ENCODE measurements at regions of chr1 and their contacts with region 1.

Region 1: DNA sequence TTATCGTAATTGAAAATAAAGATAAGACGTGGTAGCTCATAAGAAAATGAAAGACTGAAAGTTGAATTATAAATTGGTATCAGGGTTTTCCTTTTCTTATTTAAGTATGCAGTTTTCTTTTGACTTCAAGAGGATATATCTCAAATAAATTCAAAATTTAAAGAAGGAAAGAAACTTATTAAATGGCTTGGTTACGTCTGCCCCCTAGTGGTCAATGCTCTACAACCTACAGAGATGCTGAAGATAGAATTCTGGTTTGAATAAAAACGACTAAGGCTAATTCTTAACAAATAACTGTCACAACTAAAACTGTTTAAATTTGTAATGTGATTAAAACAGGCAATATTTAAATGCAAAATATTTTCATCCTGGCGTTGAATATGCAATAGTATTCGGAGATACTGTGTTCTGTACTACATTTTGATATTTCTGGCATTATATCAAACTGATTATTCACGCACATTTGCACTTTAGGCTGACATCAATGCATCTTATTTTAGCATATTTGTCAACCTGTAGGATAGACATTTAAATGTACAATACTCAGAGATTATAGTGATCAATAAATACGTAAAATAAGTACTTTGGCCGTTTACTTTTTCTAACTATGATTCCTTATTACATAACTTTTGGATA is 26.8 kb downstream of the IFI44 start:
- DNase-seq: peak; percentile 57 to 65
- H3K4me3 ChIP-seq: no peak overlapping the region
- H3K27ac ChIP-seq: no peak overlapping the region
- H3K4me1 ChIP-seq: no peaks in the 10 kb centered on the region
- H3K27me3 ChIP-seq: no peaks in the 10 kb centered on the region
- CTCF ChIP-seq: peak; percentile 62 to 90 (median 80)
- POLR2A ChIP-seq: no peak

Region 2: DNA sequence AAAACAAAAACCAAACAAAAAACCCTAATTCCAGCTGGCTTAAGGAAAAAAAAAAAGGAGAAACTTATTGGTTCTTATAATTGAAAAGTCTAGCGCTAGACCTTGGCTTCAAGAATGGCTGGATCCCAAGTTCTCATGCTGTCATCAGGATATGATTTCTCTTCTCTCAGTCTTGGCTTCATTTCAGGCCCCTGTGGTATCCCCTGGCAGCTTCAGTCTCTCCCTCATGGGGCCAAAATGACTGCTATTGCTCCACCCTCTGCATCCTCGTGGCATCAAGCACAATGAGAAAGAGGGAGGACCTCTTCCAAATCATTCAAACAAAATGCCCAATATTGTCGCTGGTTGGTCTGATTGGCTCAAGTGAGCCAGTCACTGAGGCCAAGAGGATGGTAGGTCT is 550.0 kb before region 1 on chr1:
- intact Hi-C with region 1: loop called (anchors 10 kb)
- DNase-seq: no peak
- H3K4me3 ChIP-seq: no peak overlapping the region
- H3K27ac ChIP-seq: no peak overlapping the region
- H3K4me1 ChIP-seq: no peaks in the 10 kb centered on the region
- H3K27me3 ChIP-seq: no peaks in the 10 kb centered on the region
- CTCF ChIP-seq: no peak
- POLR2A ChIP-seq: no peak

Region 3: GRCh38 chr1:78475888-78476610 is 200.4 kb before region 1 on chr1:
- intact Hi-C with region 1: no loop called
- DNase-seq: no peak
- H3K4me3 ChIP-seq: no peak overlapping the region
- H3K27ac ChIP-seq: no peak overlapping the region
- H3K4me1 ChIP-seq: no peaks in the 10 kb centered on the region
- H3K27me3 ChIP-seq: no peaks in the 10 kb centered on the region
- CTCF ChIP-seq: no peak
- POLR2A ChIP-seq: no peak

Region 4: DNA sequence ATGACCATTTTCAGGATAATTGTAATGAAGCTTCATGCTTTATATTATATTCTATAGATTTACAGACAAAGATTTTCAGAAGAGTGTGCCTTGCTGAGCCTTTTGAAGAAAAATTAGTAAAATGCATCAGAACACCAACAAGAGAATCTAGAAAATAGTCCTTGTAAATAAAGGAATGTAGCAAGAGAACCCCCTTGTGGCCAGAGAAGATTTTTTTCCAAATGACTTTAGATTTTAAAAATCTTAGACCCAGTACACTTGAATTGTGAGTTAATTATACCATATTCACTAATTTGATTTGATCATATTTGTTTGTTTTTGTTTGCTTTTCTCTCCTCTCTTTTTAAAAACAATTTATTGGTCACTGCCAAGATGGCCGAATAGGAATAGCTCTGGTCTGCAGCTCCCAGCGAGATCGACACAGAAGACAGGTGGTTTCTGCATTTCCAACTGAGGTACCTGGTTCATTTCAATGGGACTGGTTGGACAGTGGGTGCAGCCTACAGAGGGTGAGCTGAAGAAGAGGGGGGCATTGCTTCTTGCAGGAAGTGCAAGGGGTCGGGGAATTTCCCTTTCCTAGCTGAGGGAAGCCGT is 69.0 kb before region 1 on chr1:
- intact Hi-C with region 1: no loop called
- DNase-seq: no peak
- H3K4me3 ChIP-seq: no peak overlapping the region
- H3K27ac ChIP-seq: no peak overlapping the region
- H3K4me1 ChIP-seq: peaks cover 0 to 3% of the 10 kb centered on the region in 2 donors
- H3K27me3 ChIP-seq: no peaks in the 10 kb centered on the region
- CTCF ChIP-seq: peak in 5 of 6 experiments; percentile 30 to 75 (median 66)
- POLR2A ChIP-seq: no peak

Region 5: DNA sequence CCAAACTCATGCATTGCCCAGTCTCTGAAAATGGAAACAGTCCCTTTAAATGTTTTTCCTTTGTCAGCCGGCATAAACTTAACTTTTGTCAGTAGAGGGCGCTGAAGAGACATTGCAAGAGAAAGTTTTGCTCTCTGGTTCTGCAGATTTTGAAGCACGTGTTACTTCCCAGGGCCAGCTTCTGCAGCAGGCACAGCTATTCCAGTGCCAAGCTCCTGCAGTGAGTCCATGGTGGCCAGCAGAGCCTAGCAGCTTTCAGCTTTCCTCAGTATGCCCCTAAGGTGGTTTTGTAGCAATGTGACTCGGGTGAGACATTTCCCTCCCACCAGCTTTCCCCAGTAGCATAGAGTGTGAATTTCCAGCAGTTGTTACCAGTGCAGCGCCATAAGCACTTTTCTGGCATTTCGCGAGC is 58.8 kb before region 1 on chr1:
- intact Hi-C with region 1: loop called (anchors 2 kb)
- DNase-seq: peak; percentile 71 to 72
- H3K4me3 ChIP-seq: no peak overlapping the region
- H3K27ac ChIP-seq: peak overlapping the region in 1 of 3 donors; percentile 43
- H3K4me1 ChIP-seq: peaks cover 3 to 12% of the 10 kb centered on the region in 2 donors
- H3K27me3 ChIP-seq: no peaks in the 10 kb centered on the region
- CTCF ChIP-seq: peak; percentile 52 to 94 (median 88)
- POLR2A ChIP-seq: no peak

Measured in thyroid gland (tissue), 4 donors.